Heart right ventricle (tissue), 16 donors: ENCODE measurements at regions of chr12 and their contacts with region 1.

Region 1: DNA sequence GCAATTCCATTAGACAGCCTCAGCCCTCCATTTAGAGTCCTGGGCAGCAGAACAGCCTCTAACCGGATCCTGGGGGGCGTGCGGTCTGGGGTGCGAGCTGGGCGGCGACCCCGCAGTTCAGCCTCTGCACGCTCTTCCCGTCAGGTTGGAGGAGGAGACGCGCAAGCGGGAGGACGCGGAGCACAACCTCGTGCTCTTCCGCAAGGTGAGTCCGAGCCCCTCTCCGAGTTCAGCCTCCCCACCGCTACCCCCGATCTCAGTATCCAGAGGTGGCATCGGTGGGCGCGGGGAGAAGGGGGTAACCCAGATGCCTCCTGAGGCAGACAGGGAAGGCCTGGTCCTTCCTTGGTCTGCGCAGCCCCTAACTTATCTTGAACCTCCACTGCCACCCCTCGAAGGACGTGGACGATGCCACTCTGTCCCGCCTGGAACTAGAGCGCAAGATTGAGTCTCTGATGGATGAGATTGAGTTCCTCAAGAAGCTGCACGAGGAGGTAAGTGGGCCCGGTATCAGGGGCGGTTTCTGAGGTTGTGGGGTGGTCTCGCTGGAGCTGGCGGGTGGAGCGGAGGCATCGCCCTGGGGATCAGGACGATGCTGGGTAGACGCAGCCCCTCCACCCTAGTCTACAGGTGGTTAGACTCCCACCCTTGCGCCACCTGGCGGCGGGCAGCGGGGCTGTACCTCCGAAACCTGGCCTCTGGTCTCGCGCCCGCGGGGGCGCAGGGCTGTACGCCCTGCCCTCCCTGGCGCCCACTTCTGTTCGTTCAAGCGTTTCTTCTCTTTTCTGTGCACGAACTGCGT is 1.3 kb downstream of the PRPH start:
- DNase-seq: peak in 1 of 2 donors; percentile 37
- ATAC-seq: peak in 5 of 8 donors; percentile 34 to 51 (median 41)
- H3K4me3 ChIP-seq: peak overlapping the region in 4 of 10 donors; percentile 19 to 34 (median 22)
- H3K27ac ChIP-seq: no peak overlapping the region
- H3K4me1 ChIP-seq: peaks cover 12 to 40% (median 33%) of the 10 kb centered on the region in 9 donors
- H3K27me3 ChIP-seq: peaks cover 27 to 69% (median 66%) of the 10 kb centered on the region in 7 donors
- CTCF ChIP-seq: peak; percentile 25 to 73 (median 63)

Region 2: GRCh38 chr12:49331380-49332222 is 35.4 kb after region 1 on chr12:
- intact Hi-C with region 1: loop called in 3 of 10 experiments (anchors 5 kb)
- DNase-seq: peak; percentile 61
- ATAC-seq: peak; percentile 76 to 92 (median 86)
- H3K4me3 ChIP-seq: no peak overlapping the region
- H3K27ac ChIP-seq: no peak overlapping the region
- H3K4me1 ChIP-seq: peaks cover 0 to 32% (median 6%) of the 10 kb centered on the region in 9 donors
- H3K27me3 ChIP-seq: peaks cover 18 to 58% (median 43%) of the 10 kb centered on the region in 7 donors
- CTCF ChIP-seq: peak; percentile 56 to 87 (median 77)

Region 3: GRCh38 chr12:49336645-49337584 is 40.7 kb after region 1 on chr12 and contains the start of gene C1QL4:
- intact Hi-C with region 1: loop called in 5 of 10 experiments (anchors 5 to 10 kb)
- DNase-seq: peak; percentile 81 to 86
- ATAC-seq: peak; percentile 81 to 92 (median 86)
- H3K4me3 ChIP-seq: peak within 1 kb of the TSS in 9 of 10 donors; percentile 5 to 53 (median 38)
- H3K27ac ChIP-seq: no peak within 1 kb of the TSS
- H3K4me1 ChIP-seq: peaks cover 0 to 34% (median 15%) of the 10 kb centered on the region in 9 donors
- H3K27me3 ChIP-seq: peaks cover 21 to 98% (median 79%) of the 10 kb centered on the region in 7 donors
- CTCF ChIP-seq: peak; percentile 90 to 100 (median 99)
- total RNA-seq, gene C1QL4: not detected

Region 4: GRCh38 chr12:49342066-49342913 is 46.1 kb after region 1 on chr12:
- intact Hi-C with region 1: loop called in 4 of 10 experiments (anchors 5 to 10 kb)
- DNase-seq: peak; percentile 68 to 78
- ATAC-seq: peak; percentile 42 to 68 (median 58)
- H3K4me3 ChIP-seq: peak overlapping the region; percentile 32 to 58 (median 54)
- H3K27ac ChIP-seq: no peak overlapping the region
- H3K4me1 ChIP-seq: peaks cover 28 to 53% (median 46%) of the 10 kb centered on the region in 9 donors
- H3K27me3 ChIP-seq: peaks cover 15 to 98% (median 81%) of the 10 kb centered on the region in 7 donors
- CTCF ChIP-seq: peak; percentile 74 to 91 (median 83)